ENCODE measurements at regions of chr11 and their contacts with region 1.

Region 1: GRCh38 chr11:66616379-66617154 is at the start of gene RBM14:
- DNase-seq: peak; percentile 96 to 99
- H3K4me3 ChIP-seq: peak within 1 kb of the TSS; percentile 63 to 85
- H3K27ac ChIP-seq: peak within 1 kb of the TSS; percentile 92 to 95
- H3K4me1 ChIP-seq: peaks cover 6 to 30% of the 10 kb centered on the region in 2 donors
- H3K27me3 ChIP-seq: no peaks in the 10 kb centered on the region
- CTCF ChIP-seq: no peak
- total RNA-seq, gene RBM14: 39.2 TPM

Region 2: GRCh38 chr11:66545701-66546367 is 70.7 kb before region 1 on chr11 and contains the start of gene ZDHHC24:
- intact Hi-C with region 1: loop called (anchors 1 kb)
- DNase-seq: peak; percentile 87 to 98
- H3K4me3 ChIP-seq: peak within 1 kb of the TSS; percentile 80 to 92
- H3K27ac ChIP-seq: peak within 1 kb of the TSS; percentile 64
- H3K4me1 ChIP-seq: peaks cover 3 to 20% of the 10 kb centered on the region in 2 donors
- H3K27me3 ChIP-seq: no peaks in the 10 kb centered on the region
- CTCF ChIP-seq: no peak
- total RNA-seq, gene ZDHHC24: 18.0 TPM

Region 3: DNA sequence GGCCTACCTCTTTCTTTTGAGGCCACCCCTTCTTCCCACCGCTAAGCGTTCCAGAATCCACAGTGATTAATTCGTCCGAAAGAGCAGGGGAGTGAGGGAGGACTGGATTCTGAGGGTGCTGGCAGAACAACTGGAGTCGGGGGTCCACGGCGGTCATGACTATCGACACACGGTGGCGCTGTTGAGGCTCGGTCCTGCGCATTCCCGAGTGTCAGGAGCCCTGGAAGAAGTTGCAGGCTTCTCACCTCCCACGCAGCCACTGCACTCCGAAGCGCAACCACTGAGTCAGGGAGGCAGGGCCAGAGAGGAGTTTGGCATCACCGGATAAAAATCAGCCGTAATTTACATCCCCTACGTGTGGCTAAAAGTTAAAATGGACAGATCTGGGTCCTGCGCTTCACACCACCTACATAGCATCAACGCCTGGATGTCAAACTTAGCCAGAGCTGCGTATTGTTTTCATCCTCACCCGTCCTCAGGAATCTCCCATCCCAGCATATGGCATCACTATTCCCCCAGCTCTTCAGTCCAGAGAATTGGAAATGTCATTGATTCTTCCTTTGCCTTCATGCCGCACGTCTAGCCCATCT is 37.5 kb before region 1 on chr11:
- intact Hi-C with region 1: loop called (anchors 5 kb)
- DNase-seq: peak; percentile 25 to 88
- H3K4me3 ChIP-seq: peak overlapping the region in 1 of 2 donors; percentile 26
- H3K27ac ChIP-seq: no peak overlapping the region
- H3K4me1 ChIP-seq: no peaks in the 10 kb centered on the region
- H3K27me3 ChIP-seq: no peaks in the 10 kb centered on the region
- CTCF ChIP-seq: peak; percentile 85 to 92 (median 92)

Region 4: DNA sequence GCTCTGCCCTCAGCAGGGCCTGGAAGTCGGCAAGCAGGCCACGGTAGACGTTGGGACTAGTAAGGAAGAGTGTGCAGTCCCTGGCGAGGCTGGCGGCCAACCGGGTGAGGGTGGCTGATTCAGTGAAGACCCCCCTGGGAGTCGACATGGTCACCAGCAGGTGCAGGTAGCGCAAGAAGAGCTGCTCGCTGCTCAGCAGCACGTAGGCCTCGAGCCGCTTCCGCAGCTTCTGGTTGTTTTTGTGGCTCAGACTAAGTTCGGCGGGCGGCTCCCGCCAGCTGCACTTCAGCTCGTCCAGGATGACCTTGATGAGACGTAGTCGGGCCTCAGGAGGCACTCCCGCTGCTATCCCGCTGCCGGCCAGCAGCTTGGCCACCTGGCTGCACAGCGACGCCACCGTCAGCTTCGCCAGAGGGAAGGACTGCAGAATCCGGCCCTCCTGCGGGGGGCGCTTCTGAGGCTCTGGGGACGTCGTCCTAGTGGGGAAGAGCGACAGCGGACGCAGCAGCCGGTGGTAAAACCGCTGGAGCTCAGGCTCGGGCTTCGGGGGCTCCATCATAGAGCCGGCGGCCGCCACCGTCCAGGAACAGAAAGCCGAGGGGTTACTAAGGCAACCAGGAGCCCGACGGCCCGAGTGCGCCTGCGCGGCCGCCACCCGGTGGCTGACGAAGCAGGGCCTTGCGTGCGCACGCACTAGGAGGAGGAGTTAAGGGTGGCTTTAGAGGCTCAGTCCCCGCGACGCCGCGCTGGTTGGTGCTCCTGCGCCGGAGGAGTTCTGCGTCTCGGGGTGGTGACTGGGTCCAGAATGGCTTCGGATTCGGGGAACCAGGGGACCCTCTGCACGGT is 23.9 kb before region 1 on chr11 and contains the starts of genes CCDC87 and CCS:
- intact Hi-C with region 1: loop called (anchors 1 kb)
- DNase-seq: peak; percentile 90 to 99
- H3K4me3 ChIP-seq: peak within 1 kb of the TSS; percentile 70 to 82
- H3K27ac ChIP-seq: peak within 1 kb of the TSS; percentile 66 to 69
- H3K4me1 ChIP-seq: peaks cover 5 to 22% of the 10 kb centered on the region in 2 donors
- H3K27me3 ChIP-seq: no peaks in the 10 kb centered on the region
- CTCF ChIP-seq: peak; percentile 74 to 93 (median 76)
- total RNA-seq, gene CCDC87: 0.21 TPM
- total RNA-seq, gene CCS: 50.4 TPM

Region 5: GRCh38 chr11:66603072-66603471 is 13.5 kb before region 1 on chr11:
- intact Hi-C with region 1: loop called (anchors 2 kb)
- DNase-seq: no peak
- H3K4me3 ChIP-seq: no peak overlapping the region
- H3K27ac ChIP-seq: peak overlapping the region; percentile 56 to 71
- H3K4me1 ChIP-seq: peaks cover 3 to 36% of the 10 kb centered on the region in 2 donors
- H3K27me3 ChIP-seq: no peaks in the 10 kb centered on the region
- CTCF ChIP-seq: no peak

Region 6: DNA sequence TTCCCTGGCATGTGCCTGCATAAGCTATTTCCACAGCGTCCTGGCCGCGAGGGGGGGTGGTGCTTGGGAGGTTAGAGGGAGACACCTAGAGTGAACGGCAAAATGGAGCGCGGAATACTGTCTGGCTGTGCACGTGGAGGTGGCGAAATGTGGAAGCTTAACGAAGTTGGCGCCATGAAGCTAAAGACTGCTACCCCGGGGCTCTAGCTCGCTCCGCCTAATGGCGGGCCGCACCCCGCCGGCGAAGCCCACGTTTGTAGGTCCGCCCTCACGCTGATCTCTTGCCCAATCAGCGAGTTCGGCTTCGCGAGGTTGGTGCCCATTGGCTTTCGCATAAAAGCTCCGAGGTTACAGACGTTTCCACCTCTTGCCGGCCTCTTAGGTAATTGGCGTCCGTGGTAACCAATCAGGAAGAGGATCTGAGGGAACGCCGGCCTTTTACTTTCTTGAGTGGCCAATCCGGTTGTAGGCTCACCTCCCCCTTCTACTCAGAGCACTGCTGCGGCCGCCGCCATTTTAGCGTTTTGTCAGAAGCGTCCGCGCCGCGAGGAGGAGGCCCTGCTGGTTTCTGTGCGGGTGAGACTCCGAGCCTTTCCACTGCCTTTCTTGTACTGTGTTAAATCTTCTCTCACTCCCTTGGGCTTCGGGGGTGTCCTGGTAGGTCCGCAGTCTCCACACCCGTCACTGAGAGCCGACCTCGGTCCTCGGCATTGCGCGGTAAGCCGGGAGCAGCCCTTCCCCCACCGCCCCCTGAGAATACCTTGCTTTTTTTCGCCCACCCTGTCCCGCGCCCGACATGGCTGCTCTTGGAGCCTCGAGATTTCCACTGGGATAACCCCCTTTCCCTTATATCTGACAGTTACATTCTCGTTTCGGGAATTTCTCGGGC is 21.9 kb after region 1 on chr11 and contains the start of gene RBM4:
- intact Hi-C with region 1: loop called (anchors 1 kb)
- DNase-seq: peak; percentile 96 to 99
- H3K4me3 ChIP-seq: peak within 1 kb of the TSS; percentile 72 to 96
- H3K27ac ChIP-seq: peak within 1 kb of the TSS; percentile 86 to 88
- H3K4me1 ChIP-seq: peaks cover 28 to 36% of the 10 kb centered on the region in 2 donors
- H3K27me3 ChIP-seq: no peaks in the 10 kb centered on the region
- CTCF ChIP-seq: no peak
- total RNA-seq, gene RBM4: 79.5 TPM

Region 7: DNA sequence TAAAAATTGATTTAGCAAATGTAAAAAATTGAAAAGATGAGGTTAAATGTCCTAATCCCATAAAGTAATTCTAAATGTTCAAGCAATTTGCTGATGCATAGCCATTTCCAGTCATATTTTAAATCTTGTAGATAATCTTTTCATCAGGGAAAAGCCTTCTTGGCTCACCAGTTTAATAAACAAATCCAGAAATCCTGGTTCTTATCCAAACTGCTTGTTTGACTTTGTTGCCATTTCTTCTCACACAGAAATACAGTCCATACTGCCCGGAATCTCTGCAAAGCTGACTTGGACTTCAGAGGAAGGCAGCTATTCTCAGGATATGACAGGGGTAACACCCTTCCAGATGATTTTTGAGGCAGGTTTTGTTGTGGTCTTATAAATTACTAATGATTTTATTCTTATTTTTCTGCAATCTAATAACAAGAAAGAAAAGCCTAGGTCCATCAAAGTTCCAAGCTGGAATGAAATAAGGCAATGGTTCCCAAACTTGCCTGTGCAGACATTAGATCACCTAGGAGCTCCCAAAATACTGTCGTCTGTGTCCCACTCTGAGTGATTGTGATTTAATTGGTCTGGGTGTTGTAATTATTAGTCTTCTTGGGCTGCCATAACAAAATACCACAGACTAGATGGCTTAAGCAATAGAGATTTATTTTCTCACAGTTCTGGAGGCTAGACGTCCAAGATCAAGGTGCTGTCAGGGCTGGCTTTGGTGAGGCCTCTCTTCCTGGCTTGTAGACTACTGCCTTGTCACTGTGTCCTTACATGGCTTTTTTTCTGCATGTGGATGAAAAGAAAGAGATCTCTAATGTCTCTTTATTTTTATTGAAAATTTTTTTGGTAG is 171.6 kb after region 1 on chr11:
- intact Hi-C with region 1: no loop called
- DNase-seq: no peak
- H3K4me3 ChIP-seq: no peak overlapping the region
- H3K27ac ChIP-seq: peak overlapping the region in 1 of 2 donors; percentile 10
- H3K4me1 ChIP-seq: peaks cover 0 to 7% of the 10 kb centered on the region in 2 donors
- H3K27me3 ChIP-seq: no peaks in the 10 kb centered on the region
- CTCF ChIP-seq: no peak